ENCODE measurements at regions of chrX and their contacts with region 1.

Region 1: GRCh38 chrX:30673127-30673796 is 20.0 kb downstream of the GK start:
- DNase-seq: no peak
- H3K4me3 ChIP-seq: no peak overlapping the region
- H3K27ac ChIP-seq: no peak overlapping the region
- H3K4me1 ChIP-seq: no peaks in the 10 kb centered on the region
- H3K27me3 ChIP-seq: no peaks in the 10 kb centered on the region

Region 2: DNA sequence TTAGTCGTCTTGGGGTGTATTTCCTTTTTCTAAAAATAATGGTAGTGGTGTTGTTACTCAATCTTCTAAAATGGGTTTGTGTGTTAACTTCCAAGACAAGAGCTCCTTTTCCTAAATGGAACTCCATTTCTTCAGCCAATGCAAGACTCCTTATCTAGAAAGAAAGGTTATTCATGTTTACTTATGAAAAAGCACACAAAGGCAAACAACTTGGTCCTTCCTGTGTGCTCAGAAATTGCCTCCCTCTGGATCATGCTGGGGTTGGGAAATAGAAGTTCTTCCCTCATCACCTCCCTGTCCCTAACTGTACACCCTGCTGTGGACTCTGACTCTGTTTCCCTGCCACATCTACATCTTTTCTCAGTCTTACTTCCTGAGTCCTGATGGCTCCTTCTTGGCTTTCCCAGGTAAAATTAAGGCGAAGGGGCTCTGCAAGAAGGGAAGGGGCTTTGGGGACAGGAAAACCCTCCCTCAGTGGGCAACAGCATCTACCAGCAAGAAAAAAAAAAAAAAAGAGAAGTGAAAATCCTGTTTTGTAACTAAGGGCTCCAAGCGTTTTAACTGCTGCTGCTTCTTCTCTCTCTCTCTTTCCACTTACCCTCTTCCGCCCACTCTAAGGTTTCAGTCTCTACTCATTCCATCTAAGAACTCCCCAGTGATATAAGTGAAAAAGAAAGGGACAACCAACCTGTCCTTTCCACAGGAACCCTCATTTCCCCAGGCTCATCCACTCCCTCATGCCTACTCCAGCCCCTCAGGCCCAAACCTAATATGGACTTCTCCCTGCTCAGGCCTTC is 75.8 kb before region 1 on chrX:
- CTCF ChIA-PET with region 1: no interaction called
- POLR2A ChIA-PET with region 1: no interaction called
- DNase-seq: peak in 2 of 3 donors; percentile 47 to 55
- H3K4me3 ChIP-seq: no peak overlapping the region
- H3K27ac ChIP-seq: no peak overlapping the region
- H3K4me1 ChIP-seq: peaks cover 16 to 33% (median 22%) of the 10 kb centered on the region in 4 experiments
- H3K27me3 ChIP-seq: no peaks in the 10 kb centered on the region

Region 3: GRCh38 chrX:30659421-30659820 is 13.8 kb before region 1 on chrX:
- CTCF ChIA-PET with region 1: interaction called, 11 read pairs
- POLR2A ChIA-PET with region 1: no interaction called
- DNase-seq: peak; percentile 75 to 94 (median 90)
- H3K4me3 ChIP-seq: no peak overlapping the region
- H3K27ac ChIP-seq: peak overlapping the region in 1 of 2 experiments; percentile 71
- H3K4me1 ChIP-seq: peaks cover 0 to 10% (median 6%) of the 10 kb centered on the region in 4 experiments
- H3K27me3 ChIP-seq: no peaks in the 10 kb centered on the region

Measured in common myeloid progenitor, CD34-positive (primary cell).